GM10248 (cell line): ENCODE measurements at regions of chr17 and their contacts with region 1.

Region 1: GRCh38 chr17:4966844-4967538 is 626 bp downstream of the SPAG7 start:
- DNase-seq: peak; percentile 97
- CTCF ChIP-seq: no peak

Region 2: DNA sequence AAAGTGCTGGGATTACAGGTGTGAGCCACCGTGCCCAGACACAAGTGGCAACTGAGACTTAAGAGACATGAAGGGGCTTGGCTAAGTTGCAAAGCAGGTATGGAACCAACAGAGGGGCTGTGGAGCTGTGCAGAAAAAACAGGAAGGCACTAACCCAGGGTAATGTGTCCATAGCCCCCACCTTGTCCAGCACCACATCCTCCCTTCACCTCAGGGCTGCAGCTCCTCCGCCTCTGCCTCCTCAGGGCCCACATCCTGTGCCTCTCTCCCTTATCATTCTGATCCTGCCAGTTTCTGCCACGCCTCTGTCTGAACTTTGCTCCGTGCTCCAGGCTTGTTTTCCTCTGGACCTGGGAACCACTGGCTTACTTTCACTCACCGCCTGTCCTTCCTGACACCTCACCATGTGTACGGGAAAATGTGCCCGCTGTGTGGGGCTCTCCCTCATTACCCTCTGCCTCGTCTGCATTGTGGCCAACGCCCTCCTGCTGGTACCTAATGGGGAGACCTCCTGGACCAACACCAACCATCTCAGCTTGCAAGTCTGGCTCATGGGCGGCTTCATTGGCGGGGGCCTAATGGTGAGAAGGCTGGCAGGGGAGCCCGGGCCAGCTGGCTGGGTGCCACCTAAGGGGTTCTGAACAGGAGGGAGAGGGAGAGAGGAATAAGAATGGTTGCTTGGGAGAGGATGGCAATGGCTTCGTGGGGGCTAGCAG is 195.3 kb before region 1 on chr17 and contains the start of gene TM4SF5:
- CTCF ChIA-PET with region 1: no interaction called
- POLR2A ChIA-PET with region 1: no interaction called
- DNase-seq: no peak
- CTCF ChIP-seq: no peak

Region 3: DNA sequence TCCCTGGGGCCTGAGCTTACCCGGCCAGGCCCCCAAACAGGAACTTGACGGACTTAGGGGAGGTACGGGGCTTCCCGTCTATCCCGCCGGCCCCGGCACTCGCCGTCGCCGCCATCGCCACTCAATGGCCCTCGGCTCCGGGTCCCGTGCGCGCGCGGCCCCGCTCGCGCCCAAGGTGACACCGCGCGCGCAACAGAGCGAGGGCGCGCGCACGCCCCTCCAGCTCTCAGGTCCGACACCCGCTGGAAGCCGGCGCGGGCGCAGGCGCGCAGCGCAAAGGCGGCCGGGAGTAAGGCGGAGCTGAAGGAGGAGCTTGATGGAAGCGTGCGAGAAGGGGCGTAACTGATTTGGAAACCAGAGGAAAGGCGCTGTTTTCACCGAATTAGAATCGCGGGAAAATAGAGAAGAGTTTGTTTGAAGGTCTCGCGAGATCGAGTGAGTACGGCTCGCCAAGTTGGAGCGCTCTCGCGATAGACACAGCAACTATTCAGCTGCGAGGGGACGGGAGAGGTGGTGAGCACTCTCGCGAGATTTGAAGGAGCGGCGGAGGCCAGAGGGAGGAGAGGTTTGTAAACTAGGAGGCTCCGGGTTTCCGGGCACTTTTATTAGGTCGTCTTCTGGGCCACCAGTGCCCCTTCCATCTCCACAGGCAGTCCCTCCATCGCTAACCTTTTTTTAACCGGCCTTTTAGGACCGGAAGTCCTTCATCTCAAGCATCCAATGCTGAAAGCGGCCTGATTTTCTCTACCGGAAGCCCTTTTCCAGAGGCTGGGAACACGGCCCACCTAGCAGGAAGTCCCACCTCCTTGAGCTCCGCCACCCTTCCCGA is 27.0 kb before region 1 on chr17 and contains the starts of genes RNF167 and SLC25A11:
- CTCF ChIA-PET with region 1: interaction called, 3 read pairs
- POLR2A ChIA-PET with region 1: interaction called, 25 read pairs
- DNase-seq: peak; percentile 97
- CTCF ChIP-seq: no peak

Region 4: GRCh38 chr17:4948931-4949320 is 18.1 kb before region 1 on chr17:
- CTCF ChIA-PET with region 1: interaction called, 13 read pairs
- POLR2A ChIA-PET with region 1: interaction called, 34 read pairs
- DNase-seq: peak; percentile 86
- CTCF ChIP-seq: no peak

Region 5: GRCh38 chr17:4956493-4957061 is 10.4 kb before region 1 on chr17:
- CTCF ChIA-PET with region 1: interaction called, 35 read pairs
- POLR2A ChIA-PET with region 1: interaction called, 34 read pairs
- DNase-seq: no peak
- CTCF ChIP-seq: peak; percentile 59

Region 6: GRCh38 chr17:4980644-4981216 is 13.7 kb after region 1 on chr17:
- CTCF ChIA-PET with region 1: interaction called, 47 read pairs
- POLR2A ChIA-PET with region 1: no interaction called
- DNase-seq: peak; percentile 69
- CTCF ChIP-seq: peak; percentile 36

Region 7: GRCh38 chr17:4986951-4987766 is 20.2 kb after region 1 on chr17 and contains the start of gene CAMTA2:
- CTCF ChIA-PET with region 1: interaction called, 13 read pairs
- POLR2A ChIA-PET with region 1: interaction called, 4 read pairs
- DNase-seq: peak; percentile 90
- CTCF ChIP-seq: peak; percentile 80

Region 8: DNA sequence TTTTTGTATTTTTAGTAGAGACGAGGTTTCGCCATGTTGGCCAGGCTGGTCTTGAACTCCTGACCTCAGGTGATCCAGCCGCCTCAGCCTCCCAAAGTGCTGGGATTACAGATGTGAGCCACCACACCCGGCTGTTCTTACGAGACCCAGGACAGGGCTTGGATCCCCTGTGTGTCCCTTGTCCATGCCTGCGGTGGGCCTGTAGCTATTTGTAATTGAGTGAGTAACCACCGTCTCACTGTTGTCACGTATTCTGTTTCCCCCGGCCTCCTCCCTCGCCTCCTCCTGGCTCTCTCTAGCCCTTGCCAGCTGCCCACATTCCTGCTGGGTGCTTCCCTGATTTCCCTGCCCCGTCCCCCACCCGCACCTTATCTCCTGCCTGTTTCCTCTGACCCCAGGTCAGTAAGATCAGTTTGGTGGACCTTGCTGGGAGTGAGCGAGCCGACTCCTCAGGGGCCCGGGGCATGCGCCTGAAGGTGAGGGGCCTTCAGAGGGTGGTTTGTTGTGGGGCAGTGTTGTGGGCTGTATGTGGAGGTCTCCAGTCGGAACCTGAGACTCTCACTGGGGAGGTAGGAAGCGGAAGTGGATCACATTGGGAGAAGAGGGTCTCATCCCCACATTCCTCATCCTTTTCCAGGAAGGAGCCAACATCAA is 36.4 kb after region 1 on chr17:
- CTCF ChIA-PET with region 1: no interaction called
- POLR2A ChIA-PET with region 1: no interaction called
- DNase-seq: no peak
- CTCF ChIP-seq: no peak